A673 (cell line): ENCODE measurements at regions of chr6 and their contacts with region 1.

Region 1: DNA sequence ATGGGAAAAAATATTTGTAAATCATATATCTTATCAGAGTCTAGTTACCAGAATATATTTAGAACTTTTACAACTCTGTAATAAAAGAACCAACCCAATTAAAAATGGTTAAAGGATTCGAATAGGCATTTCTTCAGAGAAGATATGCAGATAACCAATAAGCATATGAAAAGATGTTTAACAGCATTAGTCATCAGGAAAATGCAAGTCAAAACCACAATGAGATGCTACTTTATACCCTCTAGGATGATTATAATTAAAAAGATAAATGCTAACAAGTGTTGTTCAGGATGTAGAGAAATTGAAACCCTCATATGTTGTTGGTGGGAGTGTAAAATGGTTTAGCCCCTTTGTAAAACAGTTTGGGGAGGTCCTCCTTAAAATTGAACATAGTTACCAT is 94.1 kb downstream of the LRRC1 start:
- DNase-seq: peak; percentile 12
- H3K4me3 ChIP-seq: no peak overlapping the region
- H3K27ac ChIP-seq: no peak overlapping the region
- H3K4me1 ChIP-seq: no peaks in the 10 kb centered on the region
- H3K27me3 ChIP-seq: no peaks in the 10 kb centered on the region
- CTCF ChIP-seq: no peak

Region 2: GRCh38 chr6:53794720-53795253 is 94.1 kb before region 1 on chr6 and contains the start of gene LRRC1:
- CTCF ChIA-PET with region 1: no interaction called
- POLR2A ChIA-PET with region 1: no interaction called
- intact Hi-C with region 1: loop called (anchors 5 kb)
- DNase-seq: peak; percentile 92
- H3K4me3 ChIP-seq: peak within 1 kb of the TSS; percentile 74
- H3K27ac ChIP-seq: peak within 1 kb of the TSS; percentile 20
- H3K4me1 ChIP-seq: peaks cover 11% of the 10 kb centered on the region
- H3K27me3 ChIP-seq: peaks cover 35% of the 10 kb centered on the region
- CTCF ChIP-seq: no peak
- total RNA-seq, gene LRRC1: 3.9 and 4.4 TPM in 2 replicates